ENCODE measurements at regions of chr20 and their contacts with region 1.

Region 1: GRCh38 chr20:45771182-45771759 is 20.4 kb downstream of the WFDC3 start:
- DNase-seq: peak; percentile 92 to 96
- H3K4me3 ChIP-seq: no peak overlapping the region
- H3K4me3 Mint-ChIP-seq: no peak overlapping the region
- H3K27ac Mint-ChIP-seq: peak overlapping the region; percentile 0
- H3K4me1 ChIP-seq: peaks cover 11% of the 10 kb centered on the region
- H3K4me1 Mint-ChIP-seq: peaks cover 10% of the 10 kb centered on the region
- H3K27me3 ChIP-seq: 0 out of 2 replicates have a peak, but pooled peaks cover 2% of the 10 kb centered on the region
- H3K27me3 Mint-ChIP-seq: peaks cover 4% of the 10 kb centered on the region
- CTCF ChIP-seq: peak; percentile 99 to 100

Region 2: GRCh38 chr20:45362804-45363610 is 408.3 kb before region 1 on chr20 and contains the start of gene SYS1:
- CTCF ChIA-PET with region 1: interaction called, 25 read pairs
- POLR2A ChIA-PET with region 1: interaction called, 3 read pairs
- intact Hi-C with region 1: loop called (anchors 1 kb)
- DNase-seq: peak; percentile 100
- H3K4me3 ChIP-seq: peak within 1 kb of the TSS; percentile 93
- H3K4me3 Mint-ChIP-seq: peak within 1 kb of the TSS; percentile 87
- H3K27ac Mint-ChIP-seq: peak within 1 kb of the TSS; percentile 91
- H3K4me1 ChIP-seq: peaks cover 46% of the 10 kb centered on the region
- H3K4me1 Mint-ChIP-seq: peaks cover 46% of the 10 kb centered on the region
- H3K27me3 ChIP-seq: no peaks in the 10 kb centered on the region
- H3K27me3 Mint-ChIP-seq: no peaks in the 10 kb centered on the region
- CTCF ChIP-seq: peak; percentile 98
- total RNA-seq, gene SYS1: 62.1 and 67.1 TPM in 2 replicates

Region 3: GRCh38 chr20:45436732-45437391 is 334.4 kb before region 1 on chr20:
- CTCF ChIA-PET with region 1: interaction called, 60 read pairs
- POLR2A ChIA-PET with region 1: no interaction called
- intact Hi-C with region 1: loop called (anchors 2 kb)
- DNase-seq: peak; percentile 95 to 98
- H3K4me3 ChIP-seq: peak overlapping the region; percentile 43
- H3K4me3 Mint-ChIP-seq: peak overlapping the region; percentile 84
- H3K27ac Mint-ChIP-seq: peak overlapping the region; percentile 71
- H3K4me1 ChIP-seq: peaks cover 25% of the 10 kb centered on the region
- H3K4me1 Mint-ChIP-seq: peaks cover 34% of the 10 kb centered on the region
- H3K27me3 ChIP-seq: no peaks in the 10 kb centered on the region
- H3K27me3 Mint-ChIP-seq: no peaks in the 10 kb centered on the region
- CTCF ChIP-seq: peak; percentile 99 to 100

Region 4: DNA sequence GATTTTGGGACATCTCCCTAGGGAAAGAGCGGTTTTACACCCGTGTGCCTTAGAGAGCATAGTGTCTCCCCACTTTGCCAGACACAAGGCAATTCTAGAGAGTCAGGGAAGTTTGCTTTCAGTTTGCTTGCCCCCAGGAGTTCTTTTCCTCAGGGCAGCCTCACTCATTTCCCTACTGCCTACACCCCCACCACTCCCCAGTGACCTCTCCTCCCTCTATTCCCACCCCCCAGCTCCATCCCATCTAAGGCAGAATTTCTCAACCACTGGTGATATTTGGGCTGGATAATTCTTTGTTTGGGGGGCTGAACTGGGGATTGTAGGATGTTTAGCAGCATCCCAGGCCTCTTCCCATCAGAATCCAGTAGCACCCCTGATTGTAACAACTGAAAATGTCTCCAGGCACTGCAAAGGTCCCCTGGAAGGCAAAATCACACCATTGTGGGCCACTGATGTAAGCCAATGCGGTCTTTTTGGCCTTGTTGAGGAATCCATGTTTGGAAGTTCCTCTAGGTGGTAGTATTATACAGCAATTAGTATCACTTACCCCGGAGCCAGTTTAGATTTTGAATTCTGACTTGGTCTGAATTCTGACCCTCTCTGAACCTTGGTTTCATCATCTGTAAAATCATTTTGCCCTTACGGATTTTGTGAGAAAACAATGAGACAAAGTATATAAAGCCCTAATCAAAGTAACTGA is 225.4 kb before region 1 on chr20:
- CTCF ChIA-PET with region 1: interaction called, 34 read pairs
- POLR2A ChIA-PET with region 1: no interaction called
- intact Hi-C with region 1: loop called (anchors 1 kb)
- DNase-seq: peak in 1 of 2 experiments; percentile 69
- H3K4me3 ChIP-seq: no peak overlapping the region
- H3K4me3 Mint-ChIP-seq: no peak overlapping the region
- H3K27ac Mint-ChIP-seq: no peak overlapping the region
- H3K4me1 ChIP-seq: no peaks in the 10 kb centered on the region
- H3K4me1 Mint-ChIP-seq: no peaks in the 10 kb centered on the region
- H3K27me3 ChIP-seq: peaks cover 3% of the 10 kb centered on the region; the same call in 1 of the 2 replicates
- H3K27me3 Mint-ChIP-seq: peaks cover 35% of the 10 kb centered on the region
- CTCF ChIP-seq: peak; percentile 66 to 88

Region 5: GRCh38 chr20:45629496-45630100 is 141.7 kb before region 1 on chr20 and contains the start of gene WFDC10A:
- CTCF ChIA-PET with region 1: interaction called, 112 read pairs
- POLR2A ChIA-PET with region 1: interaction called, 4 read pairs
- intact Hi-C with region 1: loop called (anchors 1 kb)
- DNase-seq: peak; percentile 81 to 84
- H3K4me3 ChIP-seq: no peak within 1 kb of the TSS
- H3K4me3 Mint-ChIP-seq: no peak within 1 kb of the TSS
- H3K27ac Mint-ChIP-seq: no peak within 1 kb of the TSS
- H3K4me1 ChIP-seq: no peaks in the 10 kb centered on the region
- H3K4me1 Mint-ChIP-seq: no peaks in the 10 kb centered on the region
- H3K27me3 ChIP-seq: no peaks in the 10 kb centered on the region
- H3K27me3 Mint-ChIP-seq: peaks cover 12% of the 10 kb centered on the region
- CTCF ChIP-seq: peak; percentile 90 to 99
- total RNA-seq, gene WFDC10A: not detected in 2 replicates

Region 6: DNA sequence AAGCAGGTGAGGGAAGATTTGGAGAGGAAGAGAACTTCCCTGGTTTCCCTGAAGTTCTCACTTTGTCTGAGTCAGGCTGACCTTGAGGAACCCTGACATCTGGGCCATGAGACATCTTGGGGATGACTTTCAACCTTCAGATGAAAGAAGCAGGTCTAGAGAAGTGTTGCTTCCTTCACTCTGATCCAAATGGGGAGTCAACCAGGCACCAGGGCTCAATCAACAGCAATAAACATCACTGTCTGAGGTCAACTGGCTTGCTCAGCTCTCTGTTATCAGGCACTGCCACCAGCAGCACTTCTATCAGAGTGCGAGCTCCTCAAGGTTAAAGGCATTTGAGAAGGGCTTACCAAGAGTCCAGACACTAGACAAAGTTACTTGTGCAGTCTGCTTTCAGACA is 79.7 kb after region 1 on chr20:
- CTCF ChIA-PET with region 1: no interaction called
- POLR2A ChIA-PET with region 1: no interaction called
- intact Hi-C with region 1: no loop called
- DNase-seq: no peak
- H3K4me3 ChIP-seq: no peak overlapping the region
- H3K4me3 Mint-ChIP-seq: no peak overlapping the region
- H3K27ac Mint-ChIP-seq: no peak overlapping the region
- H3K4me1 ChIP-seq: no peaks in the 10 kb centered on the region; the same call in 1 of the 2 replicates
- H3K4me1 Mint-ChIP-seq: peaks cover 6% of the 10 kb centered on the region
- H3K27me3 ChIP-seq: no peaks in the 10 kb centered on the region
- H3K27me3 Mint-ChIP-seq: no peaks in the 10 kb centered on the region
- CTCF ChIP-seq: no peak

Measured in Caco-2 (cell line).